CD4-positive, alpha-beta memory T cell (primary cell): ENCODE measurements at regions of chr14 and their contacts with region 1.

Region 1: GRCh38 chr14:95452176-95452892 is 64.1 kb downstream of the SYNE3 start:
- DNase-seq: no peak
- H3K4me3 ChIP-seq: no peak overlapping the region
- H3K4me3 Mint-ChIP-seq: no peak overlapping the region
- H3K27ac ChIP-seq: no peak overlapping the region
- H3K27ac Mint-ChIP-seq: peak overlapping the region in 1 of 7 donors; percentile 7
- H3K4me1 ChIP-seq: no peaks in the 10 kb centered on the region
- H3K4me1 Mint-ChIP-seq: peaks cover 0 to 2% (median under 1%) of the 10 kb centered on the region in 4 donors
- H3K27me3 ChIP-seq: no peaks in the 10 kb centered on the region
- H3K27me3 Mint-ChIP-seq: no peaks in the 10 kb centered on the region

Region 2: GRCh38 chr14:95424529-95424928 is 27.8 kb before region 1 on chr14:
- CTCF ChIA-PET with region 1: interaction called, 13 read pairs
- POLR2A ChIA-PET with region 1: no interaction called
- intact Hi-C with region 1: no loop called
- DNase-seq: no peak
- H3K4me3 ChIP-seq: no peak overlapping the region
- H3K4me3 Mint-ChIP-seq: no peak overlapping the region
- H3K27ac ChIP-seq: no peak overlapping the region
- H3K27ac Mint-ChIP-seq: no peak overlapping the region
- H3K4me1 ChIP-seq: no peaks in the 10 kb centered on the region
- H3K4me1 Mint-ChIP-seq: peaks cover 0 to 2% (median under 1%) of the 10 kb centered on the region in 4 donors
- H3K27me3 ChIP-seq: no peaks in the 10 kb centered on the region
- H3K27me3 Mint-ChIP-seq: no peaks in the 10 kb centered on the region